Dorsolateral prefrontal cortex (tissue), 120 donors: ENCODE measurements at regions of chr10 and their contacts with region 1.

Region 1: DNA sequence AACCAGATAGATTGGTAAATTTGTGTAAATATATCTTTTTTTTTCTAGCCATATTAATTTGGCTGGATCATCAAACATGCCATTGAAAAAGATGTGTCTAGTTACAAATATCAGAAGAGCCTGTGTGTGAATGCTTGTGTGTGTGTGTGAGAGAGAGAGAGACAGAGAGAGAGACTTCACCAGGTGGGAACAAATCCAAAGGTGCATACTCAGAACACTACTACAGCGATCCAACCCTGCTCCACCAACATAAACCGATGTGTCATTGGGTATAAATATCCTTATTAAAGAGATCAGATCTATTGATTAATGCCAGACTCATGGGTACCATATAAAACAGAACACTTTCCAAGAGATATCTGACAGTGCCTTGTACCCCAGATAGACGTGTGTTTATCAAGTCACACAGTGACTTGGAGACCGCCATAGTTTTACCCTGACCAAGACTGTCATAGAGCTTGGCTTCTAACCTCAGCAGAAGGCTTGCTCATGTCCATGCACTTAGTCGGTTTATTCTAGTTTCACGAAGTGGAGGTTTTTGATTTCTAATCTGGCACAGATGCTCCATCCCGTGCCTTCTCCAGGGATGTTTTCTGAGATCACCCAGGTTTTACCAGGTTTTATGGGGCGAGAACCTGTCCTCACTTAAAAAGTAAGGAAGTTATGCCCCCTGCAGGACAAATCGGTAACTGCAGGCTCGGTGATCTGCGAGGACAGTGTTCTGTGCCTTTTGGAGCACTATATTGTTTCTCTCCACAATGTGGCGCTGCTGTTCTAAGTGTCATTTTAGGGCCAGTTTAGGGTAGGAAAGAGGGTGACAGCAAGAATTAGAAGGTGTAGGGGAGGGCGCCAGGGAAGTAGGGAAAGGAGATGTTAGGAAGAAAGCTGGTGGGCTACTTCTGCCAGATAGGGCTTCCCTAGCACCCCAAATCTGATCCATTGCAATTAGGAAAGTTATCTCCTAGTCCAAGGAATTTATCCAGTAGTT is 29.3 kb upstream of the WNT8B start:
- DNase-seq: peak; percentile 83 to 98 (median 90)
- H3K4me3 ChIP-seq: peak overlapping the region in 2 of 59 donors; percentile 26 to 42
- H3K27ac ChIP-seq: no peak overlapping the region
- H3K27me3 ChIP-seq: no peaks in the 10 kb centered on the region
- CTCF ChIP-seq: peak; percentile 98 to 100 (median 100)

Region 2: GRCh38 chr10:100303724-100304319 is 129.7 kb before region 1 on chr10:
- intact Hi-C with region 1: loop called (anchors 5 kb)
- DNase-seq: no peak
- H3K4me3 ChIP-seq: no peak overlapping the region
- H3K27ac ChIP-seq: no peak overlapping the region
- H3K27me3 ChIP-seq: peaks cover 0 to 7% (median 0%) of the 10 kb centered on the region in 45 donors
- CTCF ChIP-seq: peak; percentile 55 to 88 (median 73)

Region 3: DNA sequence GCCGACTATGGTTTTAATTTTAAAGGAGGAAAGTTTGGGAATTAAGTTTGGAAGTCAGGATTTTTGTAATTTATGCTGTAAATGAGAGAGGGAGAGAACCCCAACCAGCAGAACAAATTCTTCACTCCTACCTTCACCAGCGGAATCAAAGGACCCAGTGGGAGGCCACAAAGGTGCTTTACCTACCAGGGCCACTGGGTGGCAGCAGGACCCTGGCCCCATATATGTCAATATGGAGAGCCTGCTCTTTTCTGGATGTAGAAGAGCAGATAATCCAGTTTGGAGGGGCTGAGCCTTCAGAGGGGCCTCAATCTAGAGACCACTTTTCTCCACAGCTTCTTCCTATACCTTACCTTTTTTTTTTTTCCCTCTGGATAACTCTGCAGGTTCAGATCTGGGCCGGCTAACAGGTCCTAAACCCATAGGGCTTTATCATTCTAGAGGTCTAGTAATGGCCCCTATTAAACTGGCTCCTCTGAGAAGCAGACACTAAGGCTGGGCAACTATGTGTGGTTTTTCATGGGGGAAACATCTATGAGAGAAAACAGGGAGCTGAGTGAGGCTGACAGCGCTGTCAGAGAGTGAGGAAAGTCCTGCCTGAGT is 95.0 kb before region 1 on chr10:
- intact Hi-C with region 1: loop called (anchors 2 kb)
- DNase-seq: peak; percentile 66 to 88 (median 82)
- H3K4me3 ChIP-seq: no peak overlapping the region
- H3K27ac ChIP-seq: peak overlapping the region in 33 of 59 donors; percentile 6 to 99 (median 59)
- H3K27me3 ChIP-seq: no peaks in the 10 kb centered on the region
- CTCF ChIP-seq: peak; percentile 72 to 97 (median 92)

Region 4: GRCh38 chr10:100373298-100374136 is 60.0 kb before region 1 on chr10:
- intact Hi-C with region 1: loop called in 1 of 2 experiments (anchors 10 kb)
- DNase-seq: peak; percentile 98 to 100 (median 99)
- H3K4me3 ChIP-seq: peak overlapping the region; percentile 40 to 98 (median 77)
- H3K27ac ChIP-seq: peak overlapping the region; percentile 91 to 100 (median 99)
- H3K27me3 ChIP-seq: no peaks in the 10 kb centered on the region
- CTCF ChIP-seq: peak in 12 of 56 donors; percentile 3 to 41 (median 14)

Region 5: GRCh38 chr10:100518761-100519241 is 85.3 kb after region 1 on chr10:
- intact Hi-C with region 1: loop called (anchors 5 to 10 kb)
- DNase-seq: peak in 7 of 10 donors; percentile 48 to 88 (median 65)
- H3K4me3 ChIP-seq: peak overlapping the region; percentile 48 to 87 (median 71)
- H3K27ac ChIP-seq: peak overlapping the region in 39 of 59 donors; percentile 9 to 88 (median 69)
- H3K27me3 ChIP-seq: no peaks in the 10 kb centered on the region
- CTCF ChIP-seq: peak; percentile 48 to 82 (median 72)

Region 6: DNA sequence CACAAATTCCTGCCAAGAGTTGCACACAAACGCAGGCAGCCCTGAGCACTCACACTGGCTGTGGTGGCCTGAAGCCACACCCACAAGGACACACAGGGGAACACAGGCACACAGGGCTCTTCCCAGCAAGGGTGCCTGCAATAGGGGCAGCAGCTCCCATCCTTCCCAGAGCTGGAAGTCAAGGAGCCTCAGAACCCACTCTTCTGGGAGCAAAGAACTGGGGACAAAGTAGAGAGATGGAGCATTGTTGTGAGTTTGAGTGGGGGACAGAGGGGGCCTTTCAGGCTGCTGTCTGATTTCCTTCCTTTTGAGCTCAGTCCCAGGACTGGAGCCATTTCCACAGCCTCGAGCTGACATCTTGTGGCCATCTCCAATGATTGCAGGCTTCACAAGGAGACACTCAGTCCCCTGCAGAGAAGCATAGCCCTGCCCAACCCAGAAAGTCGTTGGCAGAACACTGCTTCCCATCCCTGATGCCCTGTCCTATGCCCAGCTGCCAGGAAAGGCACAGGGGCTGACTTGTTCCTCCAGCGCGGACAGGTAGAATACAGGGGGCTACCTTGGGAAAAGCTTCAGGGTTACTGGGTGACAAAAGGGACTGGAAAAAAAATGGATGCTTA is 444.9 kb after region 1 on chr10:
- intact Hi-C with region 1: loop called in 1 of 2 experiments (anchors 10 kb)
- DNase-seq: peak; percentile 38 to 80 (median 71)
- H3K4me3 ChIP-seq: no peak overlapping the region
- H3K27ac ChIP-seq: peak overlapping the region in 1 of 59 donors; percentile 10
- H3K27me3 ChIP-seq: peaks cover 0 to 7% (median 0%) of the 10 kb centered on the region in 45 donors
- CTCF ChIP-seq: peak; percentile 37 to 87 (median 76)

Region 7: DNA sequence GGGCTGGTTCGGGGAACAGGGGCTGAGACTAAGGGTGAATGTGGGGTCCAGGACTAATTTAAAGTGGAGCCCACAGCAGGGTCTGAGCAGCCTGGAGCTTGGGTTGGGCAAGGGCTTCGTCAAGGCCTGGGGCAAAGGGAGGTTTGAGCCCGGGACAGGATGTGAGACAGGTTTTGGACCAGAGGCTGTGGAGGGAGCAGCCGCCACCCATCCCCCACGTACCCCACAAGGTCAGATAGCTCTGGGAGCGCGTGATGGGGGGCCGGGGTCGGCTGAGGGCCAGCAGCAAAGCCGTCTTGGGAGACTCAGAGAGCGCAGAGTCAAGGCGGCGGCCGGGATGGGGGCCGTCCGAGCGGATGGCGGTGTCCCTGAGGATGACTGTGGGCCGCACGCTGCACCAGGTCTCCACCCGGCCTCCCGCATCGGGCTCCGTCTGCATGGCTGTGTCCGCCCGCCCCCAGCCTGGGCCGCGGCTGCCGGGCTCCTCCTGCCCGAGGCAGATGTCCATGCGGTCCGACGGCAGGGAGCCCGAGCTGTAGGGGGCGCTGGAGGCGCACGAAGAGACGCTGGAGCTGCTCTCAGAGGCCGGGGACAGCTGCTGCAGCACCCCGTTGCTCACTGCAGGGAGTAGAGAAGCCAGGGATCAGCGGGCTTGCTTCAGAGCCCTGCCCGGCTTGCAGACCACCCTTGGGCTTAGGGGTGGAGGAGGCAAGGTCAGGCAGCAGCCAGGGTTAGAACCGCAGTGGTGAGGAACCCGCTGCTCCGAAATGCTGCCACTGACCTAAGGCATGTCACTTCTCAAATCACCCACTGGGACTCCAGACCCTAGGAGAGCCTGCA is 585.3 kb after region 1 on chr10:
- intact Hi-C with region 1: no loop called
- DNase-seq: peak; percentile 60 to 92 (median 88)
- H3K4me3 ChIP-seq: peak overlapping the region in 11 of 59 donors; percentile 3 to 35 (median 9)
- H3K27ac ChIP-seq: peak overlapping the region in 21 of 59 donors; percentile 1 to 64 (median 27)
- H3K27me3 ChIP-seq: no peaks in the 10 kb centered on the region
- CTCF ChIP-seq: peak in 55 of 56 donors; percentile 31 to 90 (median 78)